Endothelial cell of umbilical vein (primary cell): ENCODE measurements at regions of chr6 and their contacts with region 1.

Region 1: GRCh38 chr6:99568103-99568933 is at the start of gene CCNC:
- DNase-seq: peak; percentile 98
- H3K4me3 ChIP-seq: peak within 1 kb of the TSS; percentile 76 to 96 (median 89)
- H3K27ac ChIP-seq: peak within 1 kb of the TSS; percentile 63
- H3K4me1 ChIP-seq: peaks cover 13% of the 10 kb centered on the region
- H3K27me3 ChIP-seq: no peaks in the 10 kb centered on the region
- CTCF ChIP-seq: no peak
- POLR2A ChIP-seq: peak; percentile 92
- total RNA-seq, gene CCNC: 53.1 and 53.5 TPM in 2 replicates

Region 2: DNA sequence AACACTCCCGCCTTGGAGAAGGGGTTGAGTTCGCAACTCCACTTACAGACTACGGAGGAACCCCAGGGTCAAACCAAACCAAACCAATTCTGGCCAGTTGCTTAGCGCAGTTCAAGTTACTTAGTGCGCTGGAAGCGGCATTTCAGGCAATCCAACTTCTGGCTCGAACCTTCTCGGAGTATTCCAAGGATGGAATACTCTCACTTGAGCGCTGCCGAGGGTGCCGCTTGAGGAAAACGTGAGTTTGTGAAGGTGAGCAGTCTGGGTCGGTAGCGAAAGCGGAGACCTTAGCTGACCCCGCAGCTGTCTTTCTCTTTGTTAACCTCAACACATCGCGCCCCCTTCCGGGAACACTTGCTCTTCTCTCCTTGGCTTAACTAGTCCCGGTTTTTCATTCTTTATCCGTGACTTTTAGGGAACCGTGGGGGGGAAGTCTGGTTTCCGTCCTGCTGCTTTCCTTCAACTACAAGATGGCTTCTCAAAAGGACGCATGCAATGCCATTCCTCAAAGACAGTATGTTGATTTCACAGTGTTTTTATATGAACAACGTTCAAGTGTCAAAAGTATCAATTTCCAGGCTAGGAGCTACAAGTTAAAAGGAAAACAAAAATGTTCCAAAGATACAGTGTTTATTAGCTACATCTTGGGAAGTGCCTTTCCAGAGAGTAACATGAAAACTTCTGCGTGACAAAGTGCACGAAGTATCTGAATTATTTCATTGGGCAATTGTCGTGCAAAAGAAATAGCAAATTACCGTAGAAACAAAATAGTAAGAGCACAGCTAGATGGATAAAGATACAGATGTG is 142.5 kb before region 1 on chr6:
- CTCF ChIA-PET with region 1: no interaction called
- POLR2A ChIA-PET with region 1: no interaction called
- dilution Hi-C with region 1: no loop called
- intact Hi-C with region 1: loop called (anchors 1 kb)
- DNase-seq: peak; percentile 83
- H3K4me3 ChIP-seq: peak overlapping the region; percentile 46 to 92 (median 91)
- H3K27ac ChIP-seq: peak overlapping the region; percentile 94
- H3K4me1 ChIP-seq: peaks cover 26% of the 10 kb centered on the region
- H3K27me3 ChIP-seq: no peaks in the 10 kb centered on the region
- CTCF ChIP-seq: peak; percentile 20 to 35
- POLR2A ChIP-seq: no peak

Region 3: GRCh38 chr6:99514089-99514488 is 54.2 kb before region 1 on chr6:
- CTCF ChIA-PET with region 1: interaction called, 7 read pairs
- POLR2A ChIA-PET with region 1: interaction called, 8 read pairs
- dilution Hi-C with region 1: no loop called
- intact Hi-C with region 1: loop called (anchors 1 kb)
- DNase-seq: peak; percentile 36
- H3K4me3 ChIP-seq: peak overlapping the region; percentile 17 to 86 (median 76)
- H3K27ac ChIP-seq: no peak overlapping the region
- H3K4me1 ChIP-seq: peaks cover 13% of the 10 kb centered on the region
- H3K27me3 ChIP-seq: no peaks in the 10 kb centered on the region
- CTCF ChIP-seq: no peak
- POLR2A ChIP-seq: no peak

Region 4: DNA sequence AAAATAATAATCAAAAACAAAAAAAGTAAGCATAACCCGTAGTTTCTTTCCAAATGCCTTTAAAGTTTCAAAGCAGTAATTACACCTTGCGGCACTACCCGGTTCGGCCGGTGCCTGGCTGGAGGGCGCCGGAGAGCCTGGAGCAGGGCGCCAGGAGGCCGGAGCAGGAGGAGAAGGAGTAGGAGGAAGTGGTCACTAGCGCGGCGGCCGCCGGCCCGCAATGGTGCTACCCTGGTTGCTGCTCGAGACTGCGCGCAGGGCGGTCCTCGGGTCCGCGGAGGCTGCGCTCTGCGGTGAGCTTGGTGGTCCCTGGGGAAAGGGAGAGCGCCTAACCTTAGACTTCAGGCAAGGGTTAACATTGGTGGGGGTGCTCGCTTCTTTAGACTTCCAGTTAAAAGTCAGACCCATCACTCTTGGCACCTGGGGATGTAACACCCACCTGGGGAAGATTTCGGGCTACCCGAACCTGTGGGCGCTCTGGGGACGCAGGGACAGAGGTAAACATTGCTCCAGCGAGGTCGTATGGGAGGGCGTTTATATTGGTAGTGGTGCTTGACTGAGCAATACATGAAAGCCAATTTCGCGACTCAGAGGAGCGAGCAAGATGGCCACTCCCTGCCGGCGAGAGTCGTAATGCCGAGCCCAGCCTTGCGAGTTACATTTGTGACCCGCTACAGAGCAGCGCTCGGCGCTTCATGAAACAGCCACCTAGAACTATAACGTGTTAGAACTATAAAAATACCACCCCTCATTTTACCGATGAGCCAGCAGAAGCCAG is 47.3 kb before region 1 on chr6:
- CTCF ChIA-PET with region 1: interaction called, 7 read pairs
- POLR2A ChIA-PET with region 1: interaction called, 5 read pairs
- dilution Hi-C with region 1: no loop called
- intact Hi-C with region 1: loop called (anchors 1 kb)
- DNase-seq: peak; percentile 90
- H3K4me3 ChIP-seq: peak overlapping the region; percentile 70 to 88 (median 87)
- H3K27ac ChIP-seq: peak overlapping the region; percentile 69
- H3K4me1 ChIP-seq: peaks cover 2% of the 10 kb centered on the region
- H3K27me3 ChIP-seq: no peaks in the 10 kb centered on the region
- CTCF ChIP-seq: peak; percentile 71 to 83
- POLR2A ChIP-seq: peak; percentile 96

Region 5: GRCh38 chr6:99588618-99589289 is 20.4 kb after region 1 on chr6:
- CTCF ChIA-PET with region 1: interaction called, 5 read pairs
- POLR2A ChIA-PET with region 1: interaction called, 4 read pairs
- dilution Hi-C with region 1: no loop called
- intact Hi-C with region 1: loop called (anchors 1 kb)
- DNase-seq: peak; percentile 72
- H3K4me3 ChIP-seq: peak overlapping the region; percentile 11 to 40 (median 37)
- H3K27ac ChIP-seq: no peak overlapping the region
- H3K4me1 ChIP-seq: peaks cover 8% of the 10 kb centered on the region
- H3K27me3 ChIP-seq: peaks cover 71 to 77% of the 10 kb centered on the region in 2 experiments
- CTCF ChIP-seq: peak; percentile 36 to 69
- POLR2A ChIP-seq: no peak

Region 6: GRCh38 chr6:99603421-99604165 is 35.3 kb after region 1 on chr6:
- CTCF ChIA-PET with region 1: interaction called, 4 read pairs
- POLR2A ChIA-PET with region 1: interaction called, 11 read pairs
- dilution Hi-C with region 1: no loop called
- intact Hi-C with region 1: loop called (anchors 1 kb)
- DNase-seq: peak; percentile 38
- H3K4me3 ChIP-seq: no peak overlapping the region
- H3K27ac ChIP-seq: no peak overlapping the region
- H3K4me1 ChIP-seq: no peaks in the 10 kb centered on the region
- H3K27me3 ChIP-seq: peaks cover 79 to 100% of the 10 kb centered on the region in 2 experiments
- CTCF ChIP-seq: no peak
- POLR2A ChIP-seq: no peak

Region 7: DNA sequence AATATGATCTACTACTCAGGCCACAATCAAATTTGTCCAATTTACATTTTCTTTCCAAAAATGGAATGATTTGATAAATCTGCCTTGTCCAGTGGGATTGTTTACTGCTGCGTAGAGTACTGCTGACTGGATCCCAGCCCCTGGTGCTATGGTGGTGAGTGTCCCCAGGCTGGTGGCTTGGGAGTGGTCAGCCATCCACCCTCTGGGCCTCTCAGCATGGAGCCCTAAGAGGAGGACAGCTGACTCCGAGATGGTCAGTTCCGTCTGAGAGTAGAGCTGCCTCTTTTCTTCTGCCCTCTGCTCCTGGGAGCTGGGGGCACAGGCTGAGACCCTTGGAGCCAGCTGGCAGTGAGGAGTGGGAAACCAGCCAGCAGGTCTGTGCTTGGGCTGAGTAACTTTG is 61.0 kb after region 1 on chr6:
- CTCF ChIA-PET with region 1: no interaction called
- POLR2A ChIA-PET with region 1: no interaction called
- dilution Hi-C with region 1: no loop called
- intact Hi-C with region 1: no loop called
- DNase-seq: no peak
- H3K4me3 ChIP-seq: no peak overlapping the region
- H3K27ac ChIP-seq: no peak overlapping the region
- H3K4me1 ChIP-seq: no peaks in the 10 kb centered on the region
- H3K27me3 ChIP-seq: peaks cover 11 to 16% of the 10 kb centered on the region in 2 experiments
- CTCF ChIP-seq: no peak
- POLR2A ChIP-seq: no peak

Region 8: GRCh38 chr6:99645986-99646385 is 77.7 kb after region 1 on chr6:
- CTCF ChIA-PET with region 1: no interaction called
- POLR2A ChIA-PET with region 1: no interaction called
- dilution Hi-C with region 1: no loop called
- intact Hi-C with region 1: no loop called
- DNase-seq: no peak
- H3K4me3 ChIP-seq: no peak overlapping the region
- H3K27ac ChIP-seq: no peak overlapping the region
- H3K4me1 ChIP-seq: no peaks in the 10 kb centered on the region
- H3K27me3 ChIP-seq: peaks cover 0 to 15% of the 10 kb centered on the region in 2 experiments
- CTCF ChIP-seq: no peak
- POLR2A ChIP-seq: no peak